ENCODE measurements at regions of chr11 and their contacts with region 1.

Region 1: GRCh38 chr11:10808553-10809372 is at the start of gene EIF4G2:
- DNase-seq: peak; percentile 98 to 99 (median 99)
- H3K4me3 ChIP-seq: peak within 1 kb of the TSS; percentile 77 to 95
- H3K4me3 Mint-ChIP-seq: peak within 1 kb of the TSS; percentile 96 to 99 (median 98)
- H3K27ac ChIP-seq: peak within 1 kb of the TSS; percentile 97
- H3K27ac Mint-ChIP-seq: peak within 1 kb of the TSS; percentile 98 to 100 (median 99)
- H3K4me1 ChIP-seq: peaks cover 44% of the 10 kb centered on the region
- H3K4me1 Mint-ChIP-seq: peaks cover 27 to 62% (median 40%) of the 10 kb centered on the region in 4 donors
- H3K27me3 ChIP-seq: no peaks in the 10 kb centered on the region
- H3K27me3 Mint-ChIP-seq: peaks cover 0 to 3% of the 10 kb centered on the region in 2 donors
- total RNA-seq, gene EIF4G2: 659 to 664 TPM

Region 2: GRCh38 chr11:9573052-9573774 is 1235.5 kb before region 1 on chr11 and contains the start of gene WEE1:
- CTCF ChIA-PET with region 1: no interaction called
- POLR2A ChIA-PET with region 1: interaction called, 6 read pairs
- intact Hi-C with region 1: loop called (anchors 2 kb)
- DNase-seq: peak; percentile 94 to 96 (median 95)
- H3K4me3 ChIP-seq: peak within 1 kb of the TSS; percentile 42 to 80
- H3K4me3 Mint-ChIP-seq: peak within 1 kb of the TSS; percentile 85 to 93 (median 89)
- H3K27ac ChIP-seq: peak within 1 kb of the TSS; percentile 86
- H3K27ac Mint-ChIP-seq: peak within 1 kb of the TSS; percentile 85 to 95 (median 92)
- H3K4me1 ChIP-seq: peaks cover 55% of the 10 kb centered on the region
- H3K4me1 Mint-ChIP-seq: peaks cover 24 to 56% (median 39%) of the 10 kb centered on the region in 4 donors
- H3K27me3 ChIP-seq: no peaks in the 10 kb centered on the region
- H3K27me3 Mint-ChIP-seq: no peaks in the 10 kb centered on the region
- total RNA-seq, gene WEE1: 11.1 to 11.7 TPM

Region 3: DNA sequence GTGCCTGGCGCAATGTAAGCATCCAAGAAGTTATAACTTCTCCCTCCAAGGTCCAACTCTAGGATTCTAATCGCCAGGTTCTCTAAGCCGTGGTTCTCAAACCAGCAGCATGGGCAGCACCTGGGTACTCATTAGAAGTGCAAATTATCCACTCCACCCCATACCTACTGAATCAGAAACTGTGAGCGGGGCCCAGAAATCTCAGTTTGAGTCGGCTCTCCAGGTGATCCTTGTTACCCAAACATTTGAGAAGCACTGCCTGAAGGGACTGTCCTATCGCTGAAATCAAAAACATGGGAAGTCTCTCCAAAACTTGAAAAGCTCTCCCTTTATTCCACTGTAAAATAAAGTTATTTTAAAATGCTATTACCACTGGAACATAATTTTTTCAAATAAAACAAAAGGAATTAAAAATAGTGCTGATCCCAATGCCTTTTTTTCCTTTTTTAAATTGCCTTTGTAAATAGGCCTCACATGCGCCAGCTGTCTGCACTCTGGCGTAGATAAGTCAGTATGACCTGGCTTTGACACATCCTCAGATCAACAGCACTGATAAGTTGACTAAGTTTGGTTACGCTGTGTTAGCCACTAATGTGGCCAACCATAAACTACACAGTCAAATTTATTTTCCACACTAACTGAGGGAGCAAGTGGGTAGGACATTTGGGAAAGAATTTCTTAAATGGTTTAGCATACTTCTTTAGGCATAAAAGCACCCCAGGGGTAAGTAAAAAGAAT is 66.1 kb before region 1 on chr11:
- CTCF ChIA-PET with region 1: no interaction called
- POLR2A ChIA-PET with region 1: interaction called, 62 read pairs
- intact Hi-C with region 1: loop called (anchors 2 kb)
- DNase-seq: peak; percentile 44 to 81 (median 54)
- H3K4me3 ChIP-seq: no peak overlapping the region
- H3K4me3 Mint-ChIP-seq: peak overlapping the region; percentile 16 to 86 (median 72)
- H3K27ac ChIP-seq: peak overlapping the region; percentile 40
- H3K27ac Mint-ChIP-seq: peak overlapping the region; percentile 80 to 93 (median 84)
- H3K4me1 ChIP-seq: peaks cover 41% of the 10 kb centered on the region
- H3K4me1 Mint-ChIP-seq: peaks cover 27 to 58% (median 36%) of the 10 kb centered on the region in 4 donors
- H3K27me3 ChIP-seq: no peaks in the 10 kb centered on the region
- H3K27me3 Mint-ChIP-seq: no peaks in the 10 kb centered on the region

Region 4: DNA sequence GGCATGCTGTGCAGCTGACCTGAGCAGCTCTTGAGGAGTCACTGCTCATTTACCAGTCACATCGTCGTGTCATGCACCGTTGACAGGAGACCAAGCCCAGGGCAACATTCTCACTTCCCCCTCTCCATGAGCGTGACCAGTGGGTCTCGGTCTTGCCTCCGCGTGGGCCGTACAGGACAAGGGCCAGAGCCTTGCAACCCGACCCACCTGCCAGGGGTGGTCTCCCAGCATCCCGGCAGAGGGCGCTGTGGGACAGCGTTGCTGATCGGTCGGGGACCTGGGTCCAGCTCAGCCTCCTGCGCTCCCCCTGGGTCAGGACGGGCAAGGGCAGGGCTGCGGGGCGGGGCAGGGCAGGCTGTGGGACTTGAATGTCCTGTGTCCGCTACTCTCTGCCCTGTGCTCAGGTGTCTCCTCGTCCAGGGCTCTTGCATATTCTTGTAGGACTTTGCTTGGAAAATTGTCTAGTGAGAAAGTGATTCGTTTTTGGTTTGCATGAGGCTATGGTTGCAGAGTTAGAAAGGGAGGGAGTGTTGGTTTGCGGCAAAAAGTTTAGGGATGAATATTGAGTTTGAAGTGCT is 16.3 kb before region 1 on chr11:
- CTCF ChIA-PET with region 1: interaction called, 74 read pairs
- POLR2A ChIA-PET with region 1: interaction called, 263 read pairs
- intact Hi-C with region 1: no loop called
- DNase-seq: peak; percentile 71 to 81 (median 72)
- H3K4me3 ChIP-seq: no peak overlapping the region
- H3K4me3 Mint-ChIP-seq: peak overlapping the region in 3 of 8 donors; percentile 0 to 65 (median 58)
- H3K27ac ChIP-seq: no peak overlapping the region
- H3K27ac Mint-ChIP-seq: peak overlapping the region in 1 of 7 donors; percentile 21
- H3K4me1 ChIP-seq: peaks cover 28% of the 10 kb centered on the region
- H3K4me1 Mint-ChIP-seq: peaks cover 21 to 47% (median 33%) of the 10 kb centered on the region in 4 donors
- H3K27me3 ChIP-seq: no peaks in the 10 kb centered on the region
- H3K27me3 Mint-ChIP-seq: peaks cover 1 to 2% of the 10 kb centered on the region in 2 donors

Region 5: GRCh38 chr11:10847960-10848870 is 39.5 kb after region 1 on chr11:
- CTCF ChIA-PET with region 1: interaction called, 10 read pairs
- POLR2A ChIA-PET with region 1: interaction called, 469 read pairs
- intact Hi-C with region 1: no loop called
- DNase-seq: no peak
- H3K4me3 ChIP-seq: no peak overlapping the region
- H3K4me3 Mint-ChIP-seq: no peak overlapping the region
- H3K27ac ChIP-seq: no peak overlapping the region
- H3K27ac Mint-ChIP-seq: no peak overlapping the region
- H3K4me1 ChIP-seq: no peaks in the 10 kb centered on the region
- H3K4me1 Mint-ChIP-seq: peaks cover 6 to 14% (median 13%) of the 10 kb centered on the region in 4 donors
- H3K27me3 ChIP-seq: no peaks in the 10 kb centered on the region
- H3K27me3 Mint-ChIP-seq: no peaks in the 10 kb centered on the region

Region 6: DNA sequence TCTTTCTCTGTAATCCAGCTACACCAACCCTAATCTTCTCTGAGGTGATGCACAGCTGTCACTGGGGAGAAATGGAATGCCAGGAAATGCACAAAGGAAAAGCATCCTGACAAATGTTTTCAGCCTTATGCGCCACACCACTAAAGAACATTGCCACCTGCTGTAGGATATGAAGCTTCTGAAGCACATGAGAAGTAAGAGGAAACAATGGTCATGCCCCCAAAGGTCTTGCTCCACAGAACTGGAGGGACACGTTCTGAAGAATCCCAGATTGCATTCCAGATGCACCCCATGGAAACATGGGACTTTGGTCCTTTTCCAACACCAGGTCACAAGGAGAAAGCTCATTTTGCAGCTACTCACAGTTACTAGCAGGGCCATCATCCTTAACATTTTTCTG is 97.8 kb after region 1 on chr11:
- CTCF ChIA-PET with region 1: interaction called, 13 read pairs
- POLR2A ChIA-PET with region 1: interaction called, 5 read pairs
- intact Hi-C with region 1: no loop called
- DNase-seq: no peak
- H3K4me3 ChIP-seq: no peak overlapping the region
- H3K4me3 Mint-ChIP-seq: no peak overlapping the region
- H3K27ac ChIP-seq: no peak overlapping the region
- H3K27ac Mint-ChIP-seq: no peak overlapping the region
- H3K4me1 ChIP-seq: no peaks in the 10 kb centered on the region
- H3K4me1 Mint-ChIP-seq: no peaks in the 10 kb centered on the region
- H3K27me3 ChIP-seq: no peaks in the 10 kb centered on the region
- H3K27me3 Mint-ChIP-seq: peaks cover 1 to 16% of the 10 kb centered on the region in 2 donors

Region 7: DNA sequence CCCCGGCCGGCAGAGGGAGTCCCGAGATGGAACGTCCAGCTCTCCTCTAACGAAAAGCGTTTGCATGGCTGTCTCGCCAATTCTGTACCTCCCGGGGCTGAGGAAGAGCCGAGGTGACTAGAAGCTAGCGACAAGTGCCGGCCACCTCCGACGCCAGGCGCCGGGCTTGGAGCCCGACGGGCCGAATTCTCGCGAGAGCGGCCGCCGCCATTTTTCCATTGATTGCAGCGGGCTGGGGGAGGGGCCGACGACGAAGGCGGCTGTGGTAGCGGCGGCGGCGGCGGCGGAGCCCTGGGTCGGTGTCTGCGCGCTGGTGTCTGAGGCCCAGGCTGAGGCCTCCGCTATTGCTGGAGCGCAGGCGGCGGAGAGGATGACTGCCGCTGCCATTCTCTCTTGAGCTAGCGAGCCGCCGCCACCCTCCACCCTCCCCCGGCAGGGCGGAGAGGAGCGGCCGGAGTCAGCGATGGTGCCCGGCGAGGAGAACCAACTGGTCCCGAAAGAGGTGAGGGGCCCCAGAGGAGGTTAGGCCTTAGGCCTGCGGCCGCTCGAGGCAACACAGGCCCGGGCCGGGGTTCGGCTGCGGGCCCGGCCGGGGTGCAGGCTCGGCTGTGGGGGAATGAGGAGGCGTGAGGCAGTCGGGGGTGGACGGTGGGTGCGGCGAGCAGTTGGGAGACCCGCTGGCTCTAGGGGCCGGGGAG is 1033.1 kb after region 1 on chr11 and contains the start of gene USP47:
- CTCF ChIA-PET with region 1: interaction called, 5 read pairs
- POLR2A ChIA-PET with region 1: interaction called, 44 read pairs
- intact Hi-C with region 1: loop called (anchors 5 kb)
- DNase-seq: peak; percentile 91 to 96 (median 95)
- H3K4me3 ChIP-seq: peak within 1 kb of the TSS; percentile 27 to 85
- H3K4me3 Mint-ChIP-seq: peak within 1 kb of the TSS in 1 of 8 donors; percentile 86
- H3K27ac ChIP-seq: peak within 1 kb of the TSS; percentile 98
- H3K27ac Mint-ChIP-seq: peak within 1 kb of the TSS in 4 of 7 donors; percentile 88 to 90 (median 90)
- H3K4me1 ChIP-seq: peaks cover 39% of the 10 kb centered on the region
- H3K4me1 Mint-ChIP-seq: peaks cover 0 to 24% (median 2%) of the 10 kb centered on the region in 4 donors
- H3K27me3 ChIP-seq: no peaks in the 10 kb centered on the region
- H3K27me3 Mint-ChIP-seq: peaks cover 8 to 11% of the 10 kb centered on the region in 2 donors
- total RNA-seq, gene USP47: 62.2 to 65.9 TPM